ENCODE measurements at regions of chr1 and their contacts with region 1.

Region 1: DNA sequence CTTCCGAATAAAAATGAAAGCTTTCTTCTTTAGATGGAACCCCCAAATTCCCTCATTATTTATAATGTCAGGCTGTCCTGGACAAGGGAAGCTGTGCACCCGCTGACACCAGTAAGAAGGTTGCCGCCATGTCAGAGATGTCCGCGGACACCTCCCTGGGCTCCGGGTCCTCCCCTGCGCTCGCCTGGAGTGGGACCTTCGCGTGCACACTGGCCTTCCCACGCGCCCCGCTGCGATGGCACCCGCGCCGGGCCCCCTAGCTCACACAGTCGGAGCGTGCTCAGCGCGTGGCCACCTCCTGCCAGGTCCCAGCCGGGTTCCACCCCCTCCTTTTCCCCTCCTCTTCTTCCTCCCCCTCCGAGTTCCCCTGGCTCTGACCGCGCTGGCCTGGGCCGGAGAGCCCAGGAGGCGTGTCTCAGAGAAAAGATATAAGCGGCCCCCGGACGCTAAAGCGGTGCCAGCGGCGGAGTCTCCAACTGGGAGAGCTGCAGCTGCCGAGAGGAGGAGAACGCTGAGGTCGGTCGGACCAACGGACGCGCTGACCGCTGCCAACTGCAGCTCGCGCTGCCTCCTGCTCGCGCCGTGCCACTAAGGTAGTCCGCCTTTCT is at the start of gene G0S2:
- DNase-seq: peak; percentile 83 to 93 (median 90)
- ATAC-seq: peak; percentile 89 to 94 (median 92)
- H3K4me3 ChIP-seq: peak within 1 kb of the TSS; percentile 39 to 76 (median 64)
- H3K27ac ChIP-seq: peak within 1 kb of the TSS; percentile 18 to 91 (median 80)
- H3K4me1 ChIP-seq: peaks cover 0 to 39% (median 26%) of the 10 kb centered on the region in 12 donors
- H3K27me3 ChIP-seq: peaks cover 0 to 12% (median 0%) of the 10 kb centered on the region in 9 donors
- CTCF ChIP-seq: no peak
- POLR2A ChIP-seq: peak in 1 of 2 donors; percentile 93
- total RNA-seq, gene G0S2: 92.0 to 600 (median 212) TPM

Region 2: DNA sequence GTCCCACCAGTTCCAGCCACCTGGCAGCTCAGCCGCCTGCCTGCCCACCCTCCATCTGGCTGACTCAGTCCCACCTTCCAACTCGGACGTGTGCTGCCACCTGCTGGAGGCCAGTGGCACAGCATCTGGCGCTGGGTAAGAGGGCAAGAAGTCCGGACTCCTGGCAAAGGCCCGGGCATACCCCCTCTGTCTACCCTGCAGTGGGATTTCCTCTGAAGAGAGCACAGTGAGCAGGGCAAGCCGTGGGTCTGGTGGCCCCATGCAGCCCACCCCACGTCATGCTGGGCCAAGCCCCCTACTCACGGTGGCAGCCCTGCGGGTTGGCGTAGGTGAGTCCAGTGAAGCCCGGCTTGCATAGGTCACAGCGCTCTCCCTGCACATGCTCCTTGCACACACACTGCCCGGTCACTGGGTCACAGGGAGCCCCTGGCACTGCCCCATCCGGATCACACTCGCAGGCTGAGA is 47.3 kb before region 1 on chr1:
- intact Hi-C with region 1: loop called in 1 of 10 experiments (anchors 5 kb)
- DNase-seq: peak; percentile 78 to 88 (median 81)
- ATAC-seq: peak; percentile 29 to 77 (median 72)
- H3K4me3 ChIP-seq: peak overlapping the region in 2 of 12 donors; percentile 7 to 38
- H3K27ac ChIP-seq: peak overlapping the region in 4 of 12 donors; percentile 4 to 55 (median 38)
- H3K4me1 ChIP-seq: peaks cover 0 to 55% (median 37%) of the 10 kb centered on the region in 12 donors
- H3K27me3 ChIP-seq: no peaks in the 10 kb centered on the region
- CTCF ChIP-seq: peak; percentile 95 to 99 (median 97)
- POLR2A ChIP-seq: no peak

Region 3: GRCh38 chr1:209633335-209633997 is 41.6 kb before region 1 on chr1:
- intact Hi-C with region 1: loop called in 2 of 10 experiments (anchors 5 kb)
- DNase-seq: no peak
- ATAC-seq: no peak
- H3K4me3 ChIP-seq: no peak overlapping the region
- H3K27ac ChIP-seq: no peak overlapping the region
- H3K4me1 ChIP-seq: peaks cover 0 to 31% (median 14%) of the 10 kb centered on the region in 12 donors
- H3K27me3 ChIP-seq: no peaks in the 10 kb centered on the region
- CTCF ChIP-seq: no peak
- POLR2A ChIP-seq: no peak

Region 4: DNA sequence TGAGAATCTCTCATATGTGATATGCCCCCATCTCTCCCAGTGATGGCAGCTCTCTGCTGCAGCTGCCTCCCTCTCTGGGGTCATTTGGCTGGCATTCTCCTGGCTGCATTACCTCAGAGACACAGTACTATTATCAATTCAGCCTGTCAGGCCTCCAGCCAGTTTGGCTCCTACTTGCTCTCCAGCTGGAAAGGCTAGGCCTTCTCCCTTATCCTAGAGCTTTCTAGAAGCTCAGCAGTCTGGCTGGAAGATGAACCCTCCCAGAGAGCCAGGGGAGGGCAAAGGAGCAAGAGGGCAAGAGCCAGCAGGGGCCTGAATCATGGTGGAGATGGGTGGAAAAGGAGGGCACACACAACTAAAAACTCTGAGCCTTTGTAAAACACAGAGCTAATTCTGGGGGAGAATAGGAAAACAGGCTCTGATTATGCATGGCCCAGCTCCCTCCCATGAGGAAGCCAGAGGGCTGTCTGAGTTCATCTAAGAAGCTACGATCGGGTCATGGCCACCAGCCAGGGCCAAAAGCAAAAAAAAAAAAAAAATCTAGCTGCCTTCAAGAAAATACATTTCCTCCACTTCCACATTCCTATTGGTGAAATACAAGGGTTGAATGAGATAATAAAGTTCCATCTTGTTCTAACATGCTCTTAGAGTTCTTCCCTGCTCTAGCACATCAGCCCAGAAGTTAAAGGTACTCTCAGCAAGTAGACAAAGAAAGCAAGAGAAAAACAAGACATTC is 31.6 kb before region 1 on chr1:
- intact Hi-C with region 1: loop called in 6 of 10 experiments (anchors 2 to 5 kb)
- DNase-seq: peak in 4 of 5 donors; percentile 80 to 91 (median 85)
- ATAC-seq: peak; percentile 68 to 87 (median 80)
- H3K4me3 ChIP-seq: no peak overlapping the region
- H3K27ac ChIP-seq: peak overlapping the region; percentile 38 to 94 (median 90)
- H3K4me1 ChIP-seq: peaks cover 16 to 84% (median 73%) of the 10 kb centered on the region in 12 donors
- H3K27me3 ChIP-seq: no peaks in the 10 kb centered on the region
- CTCF ChIP-seq: peak in 2 of 12 donors; percentile 6 to 27
- POLR2A ChIP-seq: no peak

Region 5: GRCh38 chr1:209648931-209649776 is 25.9 kb before region 1 on chr1:
- intact Hi-C with region 1: loop called in 4 of 10 experiments (anchors 2 to 5 kb)
- DNase-seq: no peak
- ATAC-seq: peak in 3 of 4 donors; percentile 47 to 66 (median 62)
- H3K4me3 ChIP-seq: no peak overlapping the region
- H3K27ac ChIP-seq: peak overlapping the region in 10 of 12 donors; percentile 4 to 94 (median 34)
- H3K4me1 ChIP-seq: peaks cover 10 to 97% (median 77%) of the 10 kb centered on the region in 12 donors
- H3K27me3 ChIP-seq: no peaks in the 10 kb centered on the region
- CTCF ChIP-seq: no peak
- POLR2A ChIP-seq: no peak